ENCODE measurements at regions of chr10 and their contacts with region 1.

Region 1: DNA sequence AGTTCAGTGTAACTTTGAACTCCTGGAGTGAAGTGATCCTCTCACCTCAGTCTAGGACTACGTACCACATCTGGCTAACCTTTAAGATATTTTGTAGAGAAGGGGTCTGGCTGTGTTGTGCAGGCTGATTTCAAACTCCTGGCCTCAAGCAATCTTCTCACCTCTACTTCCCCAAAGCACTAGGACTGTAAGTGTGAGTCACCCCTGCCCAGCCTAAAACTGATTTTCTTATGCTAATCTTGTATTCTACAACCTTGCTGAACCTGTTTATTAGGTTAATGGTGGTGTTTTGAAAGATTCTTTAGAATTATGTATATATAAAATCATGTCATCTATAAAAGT is 58.0 kb downstream of the LCOR start:
- DNase-seq: no peak
- H3K4me3 Mint-ChIP-seq: no peak overlapping the region
- H3K27ac Mint-ChIP-seq: no peak overlapping the region
- H3K4me1 Mint-ChIP-seq: peaks cover 34% of the 10 kb centered on the region
- H3K27me3 Mint-ChIP-seq: no peaks in the 10 kb centered on the region

Region 2: DNA sequence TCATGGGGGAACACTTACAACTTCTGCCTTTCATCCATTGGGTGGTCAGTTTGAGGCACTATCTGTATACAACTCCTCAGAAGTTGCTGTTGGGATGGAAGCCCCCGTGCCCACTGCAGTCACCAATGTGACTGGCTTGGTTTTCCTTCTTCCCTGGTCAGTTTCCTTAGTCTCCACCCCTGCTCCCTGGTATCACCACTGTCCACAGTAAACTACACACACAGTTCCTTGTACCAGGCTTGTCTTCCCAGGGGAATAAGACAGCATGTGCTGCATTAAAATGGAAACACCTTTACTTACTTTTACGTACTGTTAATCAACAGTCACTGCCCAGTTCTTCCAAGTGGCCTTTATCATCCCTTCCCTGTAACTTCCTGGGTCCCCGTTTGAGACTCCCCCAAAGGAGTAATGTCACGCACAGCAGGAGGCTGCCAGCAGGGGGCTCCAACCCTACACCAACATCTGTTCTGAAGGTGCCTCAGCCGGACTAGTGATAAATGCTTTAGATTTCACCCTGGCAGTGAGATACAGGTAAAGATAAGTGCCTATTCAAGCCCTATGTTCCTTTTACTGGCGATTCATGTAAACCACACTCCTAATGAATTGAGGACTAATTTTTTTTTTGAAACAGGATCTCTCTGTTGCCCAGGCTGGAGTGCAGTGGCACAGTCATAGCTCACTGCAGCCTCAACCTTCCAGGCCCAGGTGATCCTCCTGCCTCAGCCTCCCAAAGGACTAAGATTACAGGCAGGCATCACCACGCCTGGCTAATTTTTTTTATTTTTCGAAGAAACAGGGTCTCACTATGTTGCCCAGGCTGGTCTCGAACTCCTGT is 124.5 kb before region 1 on chr10:
- CTCF ChIA-PET with region 1: no interaction called
- intact Hi-C with region 1: loop called (anchors 10 kb)
- DNase-seq: peak; percentile 86
- H3K4me3 Mint-ChIP-seq: no peak overlapping the region
- H3K27ac Mint-ChIP-seq: no peak overlapping the region
- H3K4me1 Mint-ChIP-seq: peaks cover 2% of the 10 kb centered on the region
- H3K27me3 Mint-ChIP-seq: no peaks in the 10 kb centered on the region

Region 3: DNA sequence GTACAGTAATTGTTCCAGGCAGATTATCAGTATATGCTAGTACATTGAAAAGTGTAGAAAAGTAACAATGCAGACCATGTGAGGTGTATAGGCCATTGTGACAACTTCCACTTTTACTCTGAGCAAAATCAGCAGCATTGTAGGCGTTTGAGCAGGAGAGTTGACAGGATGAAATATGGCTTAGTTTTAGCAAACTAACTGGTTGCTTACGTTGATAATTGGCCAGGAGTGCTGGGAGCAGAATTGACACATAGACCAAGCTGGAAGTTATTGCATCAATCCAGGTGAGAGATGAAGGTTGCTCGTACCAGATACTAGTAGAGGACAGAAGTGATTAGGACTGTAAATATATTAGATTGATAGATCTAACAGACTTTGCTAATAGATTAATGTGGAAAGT is 12.1 kb before region 1 on chr10:
- CTCF ChIA-PET with region 1: no interaction called
- intact Hi-C with region 1: no loop called
- DNase-seq: no peak
- H3K4me3 Mint-ChIP-seq: no peak overlapping the region
- H3K27ac Mint-ChIP-seq: no peak overlapping the region
- H3K4me1 Mint-ChIP-seq: peaks cover 51% of the 10 kb centered on the region
- H3K27me3 Mint-ChIP-seq: no peaks in the 10 kb centered on the region

Region 4: DNA sequence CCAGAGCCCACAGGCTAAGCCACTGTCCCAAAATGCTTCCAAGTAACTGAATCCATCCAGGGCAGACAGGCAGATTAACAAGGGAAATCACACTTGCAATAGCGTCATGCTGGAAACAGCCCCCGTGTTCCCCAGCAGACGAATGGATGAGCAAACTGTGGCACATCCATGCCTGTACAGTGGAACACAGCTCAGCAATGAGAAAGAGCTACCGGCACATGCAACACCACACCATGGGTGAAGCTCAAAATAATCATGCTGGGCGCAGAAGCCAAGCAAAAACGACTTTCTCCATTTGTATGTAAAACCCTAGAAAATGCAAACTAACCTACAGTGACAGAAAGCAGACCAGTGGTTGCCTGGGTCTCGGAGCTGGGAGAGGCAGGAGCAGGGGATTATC is 142.5 kb after region 1 on chr10:
- CTCF ChIA-PET with region 1: no interaction called
- intact Hi-C with region 1: no loop called
- DNase-seq: no peak
- H3K4me3 Mint-ChIP-seq: no peak overlapping the region
- H3K27ac Mint-ChIP-seq: no peak overlapping the region
- H3K4me1 Mint-ChIP-seq: peaks cover 4% of the 10 kb centered on the region
- H3K27me3 Mint-ChIP-seq: no peaks in the 10 kb centered on the region

Region 5: DNA sequence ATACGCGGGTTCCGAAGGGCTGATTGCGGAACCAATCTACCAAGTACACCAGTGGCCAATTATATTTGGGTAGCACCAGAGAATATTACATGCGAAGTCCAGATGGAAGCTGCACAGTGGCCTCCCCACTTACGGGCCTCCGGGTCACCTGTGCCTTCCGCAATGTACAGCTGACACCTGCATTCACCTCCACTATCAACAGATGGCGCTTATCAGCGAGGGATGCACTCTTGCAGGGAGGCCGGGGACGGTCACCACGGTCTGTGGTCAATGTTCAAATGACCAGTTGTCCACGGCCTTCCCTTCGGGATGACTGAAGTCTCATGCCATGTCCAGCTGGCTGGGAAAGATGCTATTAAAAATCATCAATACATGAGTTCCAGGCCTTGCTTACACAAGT is 248.0 kb after region 1 on chr10:
- CTCF ChIA-PET with region 1: no interaction called
- intact Hi-C with region 1: no loop called
- DNase-seq: no peak
- H3K4me3 Mint-ChIP-seq: no peak overlapping the region
- H3K27ac Mint-ChIP-seq: no peak overlapping the region
- H3K4me1 Mint-ChIP-seq: no peaks in the 10 kb centered on the region
- H3K27me3 Mint-ChIP-seq: peaks cover 18% of the 10 kb centered on the region